Colonic mucosa (tissue), 4 donors: ENCODE measurements at regions of chr22 and their contacts with region 1.

Region 1: GRCh38 chr22:38272373-38273134 is at the start of gene TMEM184B:
- DNase-seq: peak; percentile 75
- H3K4me3 ChIP-seq: peak within 1 kb of the TSS; percentile 99
- H3K27ac ChIP-seq: peak within 1 kb of the TSS; percentile 72
- H3K4me1 ChIP-seq: peaks cover 28% of the 10 kb centered on the region
- H3K27me3 ChIP-seq: no peaks in the 10 kb centered on the region
- CTCF ChIP-seq: no peak
- total RNA-seq, gene TMEM184B: 58.8 to 61.6 TPM

Region 2: DNA sequence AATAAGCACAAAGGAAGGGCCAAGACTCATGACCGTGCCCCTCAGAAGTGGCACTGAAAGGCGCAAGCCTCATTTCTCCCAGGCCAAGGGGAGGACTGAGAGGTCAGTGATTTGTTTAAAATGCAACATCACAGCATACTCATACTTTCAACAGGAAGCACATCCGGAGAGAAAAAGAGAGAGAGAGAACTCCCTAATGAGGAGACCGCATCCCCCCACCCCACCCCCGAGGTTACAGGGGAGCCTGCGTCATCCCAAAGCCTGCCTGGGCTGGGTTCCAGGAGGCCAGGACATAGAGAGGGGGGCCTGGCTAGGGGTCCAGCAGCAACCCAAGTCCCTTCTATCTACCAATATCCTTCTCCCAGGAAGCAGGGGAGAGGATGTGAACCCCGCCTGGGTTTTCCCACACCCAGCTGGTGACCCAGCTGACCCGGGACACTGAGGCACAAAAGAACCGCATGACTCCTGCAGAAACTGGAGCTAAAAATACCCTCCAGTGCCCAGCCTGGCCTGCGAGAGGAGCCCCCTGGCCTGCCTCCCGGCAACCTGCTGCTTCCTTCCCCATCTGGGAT is 40.9 kb after region 1 on chr22:
- intact Hi-C with region 1: loop called (anchors 5 kb)
- DNase-seq: peak; percentile 52
- H3K4me3 ChIP-seq: no peak overlapping the region
- H3K27ac ChIP-seq: peak overlapping the region; percentile 94
- H3K4me1 ChIP-seq: peaks cover 5% of the 10 kb centered on the region
- H3K27me3 ChIP-seq: no peaks in the 10 kb centered on the region
- CTCF ChIP-seq: no peak

Region 3: GRCh38 chr22:38435010-38435409 is 162.5 kb after region 1 on chr22:
- intact Hi-C with region 1: no loop called
- DNase-seq: no peak
- H3K4me3 ChIP-seq: no peak overlapping the region
- H3K27ac ChIP-seq: no peak overlapping the region
- H3K4me1 ChIP-seq: no peaks in the 10 kb centered on the region
- H3K27me3 ChIP-seq: no peaks in the 10 kb centered on the region
- CTCF ChIP-seq: no peak